ENCODE measurements at regions of chr4 and their contacts with region 1.

Region 1: DNA sequence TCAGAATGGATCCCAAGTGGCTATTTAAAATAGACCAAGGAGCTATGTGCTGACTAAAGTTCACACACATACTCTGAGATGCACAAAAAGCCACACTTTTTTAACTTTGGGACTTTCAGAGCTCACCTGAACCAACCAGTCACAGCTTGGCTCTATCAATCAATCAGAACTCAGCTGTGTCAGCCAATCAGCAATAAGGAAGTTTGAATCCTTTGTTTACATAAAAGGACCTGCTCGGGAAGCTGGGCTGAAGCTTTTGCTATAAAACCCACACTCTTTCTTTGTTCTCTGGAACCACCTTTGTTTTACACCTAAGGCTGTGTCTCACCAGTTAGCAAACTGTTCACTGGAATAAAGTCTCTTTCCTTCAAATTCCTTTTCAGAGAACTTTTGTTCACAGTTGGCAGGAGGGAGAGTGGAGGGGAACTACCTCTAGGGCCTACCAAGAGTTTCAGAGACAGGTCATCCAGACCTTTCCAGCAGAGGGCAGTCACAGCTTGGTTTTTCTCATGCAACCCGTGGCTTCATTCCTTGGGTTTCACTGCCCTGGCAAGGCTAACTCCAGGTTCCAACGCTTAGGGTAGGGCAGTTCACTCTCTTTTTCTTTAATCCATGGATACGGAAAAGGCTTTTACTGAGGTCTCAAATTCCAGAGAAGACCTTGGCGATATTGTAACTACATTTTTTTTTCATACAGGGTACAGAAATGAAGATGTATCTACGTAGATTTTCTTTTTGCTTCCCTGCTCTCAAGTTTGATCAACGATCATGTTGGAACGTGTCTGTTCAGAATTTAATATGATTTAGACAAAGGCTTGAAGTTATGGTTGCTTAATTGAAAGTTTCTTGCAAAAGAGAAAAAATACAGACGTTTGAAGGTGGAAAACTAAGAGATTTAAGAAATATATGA is 80.7 kb downstream of the GPRIN3 start:
- DNase-seq: peak; percentile 55 to 86 (median 77)
- ATAC-seq: peak; percentile 94
- H3K4me3 ChIP-seq: no peak overlapping the region
- H3K4me3 Mint-ChIP-seq: peak overlapping the region; percentile 70
- H3K27ac ChIP-seq: no peak overlapping the region
- H3K27ac Mint-ChIP-seq: no peak overlapping the region
- H3K4me1 ChIP-seq: no peaks in the 10 kb centered on the region
- H3K4me1 Mint-ChIP-seq: peaks cover 2% of the 10 kb centered on the region
- H3K27me3 ChIP-seq: no peaks in the 10 kb centered on the region
- H3K27me3 Mint-ChIP-seq: peaks cover 2% of the 10 kb centered on the region
- CTCF ChIP-seq: peak; percentile 82

Region 2: DNA sequence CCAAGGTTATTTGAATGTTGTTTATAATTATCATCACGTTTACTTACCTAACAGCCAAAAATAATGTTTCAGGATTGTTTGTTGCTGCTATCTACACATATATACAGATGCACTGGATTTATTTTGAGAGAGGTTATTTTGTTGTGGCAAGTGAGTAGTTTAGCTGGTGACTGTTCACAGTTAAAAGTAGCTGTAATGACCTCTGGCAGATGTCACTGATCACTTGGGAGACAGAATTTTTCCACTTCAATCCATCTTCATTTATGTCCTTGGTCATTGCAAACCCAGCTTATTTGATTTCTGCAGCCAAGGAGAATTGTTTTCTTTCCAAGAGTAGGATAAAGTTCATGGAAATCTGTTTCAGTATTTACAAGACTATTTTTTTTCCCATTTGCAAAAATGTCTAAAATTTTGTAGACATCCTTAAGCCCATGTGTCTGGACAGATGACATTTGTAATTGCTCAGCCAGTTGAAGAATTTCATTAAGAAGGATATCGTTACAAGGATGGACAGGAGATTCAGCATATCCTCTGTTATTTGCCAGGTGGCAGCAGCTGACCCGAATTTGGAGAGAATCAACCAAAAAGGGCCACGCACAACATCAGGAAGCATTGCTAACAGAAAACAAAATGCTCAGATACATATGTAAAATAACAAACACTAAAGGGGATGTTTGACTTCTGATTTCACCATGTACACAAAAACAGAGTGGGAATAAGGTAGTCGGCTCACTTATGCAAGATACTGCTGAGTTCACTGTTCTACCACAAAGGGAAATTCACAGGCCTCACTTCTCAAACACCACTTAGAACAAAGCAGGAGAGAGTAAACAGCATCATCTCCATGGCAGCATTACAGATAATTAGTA is 16.2 kb after region 1 on chr4:
- CTCF ChIA-PET with region 1: interaction called, 14 read pairs
- POLR2A ChIA-PET with region 1: no interaction called
- intact Hi-C with region 1: no loop called
- DNase-seq: peak in 2 of 9 experiments; percentile 72 to 83
- ATAC-seq: peak; percentile 80
- H3K4me3 ChIP-seq: no peak overlapping the region
- H3K4me3 Mint-ChIP-seq: no peak overlapping the region
- H3K27ac ChIP-seq: peak overlapping the region in 1 of 2 experiments; percentile 59
- H3K27ac Mint-ChIP-seq: peak overlapping the region; percentile 71
- H3K4me1 ChIP-seq: peaks cover 13% of the 10 kb centered on the region
- H3K4me1 Mint-ChIP-seq: peaks cover 43% of the 10 kb centered on the region
- H3K27me3 ChIP-seq: no peaks in the 10 kb centered on the region
- H3K27me3 Mint-ChIP-seq: no peaks in the 10 kb centered on the region
- CTCF ChIP-seq: no peak

Region 3: GRCh38 chr4:89283226-89284009 is 56.5 kb after region 1 on chr4:
- CTCF ChIA-PET with region 1: interaction called, 11 read pairs
- POLR2A ChIA-PET with region 1: no interaction called
- intact Hi-C with region 1: no loop called
- DNase-seq: peak in 8 of 9 experiments; percentile 34 to 86 (median 59)
- ATAC-seq: peak; percentile 80
- H3K4me3 ChIP-seq: peak overlapping the region in 1 of 2 experiments; percentile 36
- H3K4me3 Mint-ChIP-seq: peak overlapping the region; percentile 68
- H3K27ac ChIP-seq: peak overlapping the region; percentile 69 to 94
- H3K27ac Mint-ChIP-seq: peak overlapping the region; percentile 93
- H3K4me1 ChIP-seq: peaks cover 45% of the 10 kb centered on the region
- H3K4me1 Mint-ChIP-seq: peaks cover 67% of the 10 kb centered on the region
- H3K27me3 ChIP-seq: no peaks in the 10 kb centered on the region
- H3K27me3 Mint-ChIP-seq: no peaks in the 10 kb centered on the region
- CTCF ChIP-seq: no peak

Region 4: GRCh38 chr4:89316931-89317366 is 90.0 kb after region 1 on chr4:
- CTCF ChIA-PET with region 1: interaction called, 11 read pairs
- POLR2A ChIA-PET with region 1: no interaction called
- intact Hi-C with region 1: no loop called
- DNase-seq: peak in 5 of 9 experiments; percentile 33 to 70 (median 54)
- ATAC-seq: peak; percentile 87
- H3K4me3 ChIP-seq: no peak overlapping the region
- H3K4me3 Mint-ChIP-seq: peak overlapping the region; percentile 20
- H3K27ac ChIP-seq: peak overlapping the region; percentile 13 to 67
- H3K27ac Mint-ChIP-seq: peak overlapping the region; percentile 86
- H3K4me1 ChIP-seq: peaks cover 18% of the 10 kb centered on the region
- H3K4me1 Mint-ChIP-seq: peaks cover 20% of the 10 kb centered on the region
- H3K27me3 ChIP-seq: no peaks in the 10 kb centered on the region
- H3K27me3 Mint-ChIP-seq: no peaks in the 10 kb centered on the region
- CTCF ChIP-seq: no peak

Region 5: DNA sequence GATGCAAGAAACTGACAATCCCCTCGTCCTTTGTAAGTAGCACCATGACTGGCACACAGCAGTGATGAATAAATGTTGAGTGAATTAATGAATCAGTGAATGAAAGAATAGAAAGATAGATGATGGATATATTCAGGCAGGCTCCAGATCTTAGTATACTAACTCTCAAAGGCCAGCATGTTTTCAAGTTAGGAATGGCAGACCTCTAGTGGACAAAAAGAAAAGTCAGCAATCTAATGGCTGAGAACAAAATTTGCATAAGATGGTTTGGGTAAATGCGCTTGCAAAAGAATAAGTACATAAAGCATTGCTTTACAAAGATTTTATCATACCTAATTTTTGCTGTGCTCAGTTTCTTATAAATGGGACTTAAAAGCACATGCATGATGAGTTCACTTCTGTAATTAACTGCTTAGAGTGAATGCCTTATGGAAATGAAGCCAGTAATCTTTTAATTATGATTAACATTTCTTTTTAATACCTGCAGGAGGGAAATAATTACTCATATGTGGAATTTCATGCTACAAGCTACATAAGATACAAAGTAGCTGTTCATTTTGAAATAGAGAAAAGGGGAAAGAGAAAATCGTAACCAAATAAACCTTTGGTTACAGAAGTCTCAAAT is 207.6 kb after region 1 on chr4:
- CTCF ChIA-PET with region 1: interaction called, 117 read pairs
- POLR2A ChIA-PET with region 1: no interaction called
- intact Hi-C with region 1: loop called (anchors 1 kb)
- DNase-seq: peak in 2 of 9 experiments; percentile 57 to 70
- ATAC-seq: peak; percentile 67
- H3K4me3 ChIP-seq: no peak overlapping the region
- H3K4me3 Mint-ChIP-seq: no peak overlapping the region
- H3K27ac ChIP-seq: no peak overlapping the region
- H3K27ac Mint-ChIP-seq: no peak overlapping the region
- H3K4me1 ChIP-seq: peaks cover 6% of the 10 kb centered on the region
- H3K4me1 Mint-ChIP-seq: peaks cover 7% of the 10 kb centered on the region
- H3K27me3 ChIP-seq: no peaks in the 10 kb centered on the region
- H3K27me3 Mint-ChIP-seq: peaks cover 4% of the 10 kb centered on the region
- CTCF ChIP-seq: peak; percentile 78

Measured in CD8-positive, alpha-beta T cell (primary cell).